ENCODE measurements at regions of chr1 and their contacts with region 1.

Region 1: GRCh38 chr1:30718636-30719405 is 4.6 kb downstream of the MATN1 start:
- DNase-seq: peak; percentile 32 to 99
- H3K4me3 ChIP-seq: peak overlapping the region; percentile 59 to 71
- H3K27ac ChIP-seq: peak overlapping the region; percentile 99
- H3K4me1 ChIP-seq: peaks cover 0 to 4% of the 10 kb centered on the region in 2 donors
- H3K27me3 ChIP-seq: no peaks in the 10 kb centered on the region
- CTCF ChIP-seq: peak; percentile 99 to 100 (median 99)

Region 2: DNA sequence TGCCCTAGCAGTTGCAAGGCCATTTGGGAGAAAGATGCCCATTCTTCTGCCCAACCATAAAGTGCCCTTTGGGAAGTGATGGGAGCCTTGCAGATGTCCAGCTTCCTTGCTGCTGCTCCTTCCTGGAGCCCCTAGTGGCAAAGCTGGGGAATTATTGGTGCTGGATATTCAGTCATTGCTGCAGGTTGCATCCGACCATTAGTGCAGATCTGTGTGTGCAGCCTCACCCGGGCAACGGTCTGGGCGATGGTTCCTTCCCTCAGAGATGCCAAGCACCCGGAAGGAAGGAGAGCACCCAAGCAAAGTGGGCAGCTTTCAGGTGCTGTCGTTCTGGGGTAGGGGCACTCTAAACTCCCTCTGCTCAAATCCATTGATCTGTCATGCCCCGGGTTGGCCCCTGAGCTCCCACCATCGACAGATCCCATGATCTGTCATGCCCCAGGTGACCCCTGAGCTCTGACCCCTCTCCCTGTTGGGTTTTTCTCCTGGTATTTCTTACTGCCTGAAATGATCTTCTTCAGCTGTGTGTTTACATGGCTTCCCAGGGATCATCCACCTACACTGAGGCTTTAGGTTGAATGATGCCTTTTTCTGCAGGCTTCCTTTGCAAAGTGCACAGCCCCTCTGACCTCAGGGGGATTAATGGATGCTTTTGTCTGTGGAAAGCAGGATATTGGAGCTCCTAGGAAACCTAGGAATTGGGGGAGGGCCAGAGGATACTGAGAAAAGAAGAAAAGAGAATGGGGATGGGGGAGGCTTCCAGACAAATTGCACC is 1015.0 kb before region 1 on chr1:
- intact Hi-C with region 1: loop called (anchors 5 kb)
- DNase-seq: no peak
- H3K4me3 ChIP-seq: no peak overlapping the region
- H3K27ac ChIP-seq: no peak overlapping the region
- H3K4me1 ChIP-seq: peaks cover 9 to 13% of the 10 kb centered on the region in 2 donors
- H3K27me3 ChIP-seq: no peaks in the 10 kb centered on the region
- CTCF ChIP-seq: peak; percentile 11 to 74 (median 62)

Region 3: DNA sequence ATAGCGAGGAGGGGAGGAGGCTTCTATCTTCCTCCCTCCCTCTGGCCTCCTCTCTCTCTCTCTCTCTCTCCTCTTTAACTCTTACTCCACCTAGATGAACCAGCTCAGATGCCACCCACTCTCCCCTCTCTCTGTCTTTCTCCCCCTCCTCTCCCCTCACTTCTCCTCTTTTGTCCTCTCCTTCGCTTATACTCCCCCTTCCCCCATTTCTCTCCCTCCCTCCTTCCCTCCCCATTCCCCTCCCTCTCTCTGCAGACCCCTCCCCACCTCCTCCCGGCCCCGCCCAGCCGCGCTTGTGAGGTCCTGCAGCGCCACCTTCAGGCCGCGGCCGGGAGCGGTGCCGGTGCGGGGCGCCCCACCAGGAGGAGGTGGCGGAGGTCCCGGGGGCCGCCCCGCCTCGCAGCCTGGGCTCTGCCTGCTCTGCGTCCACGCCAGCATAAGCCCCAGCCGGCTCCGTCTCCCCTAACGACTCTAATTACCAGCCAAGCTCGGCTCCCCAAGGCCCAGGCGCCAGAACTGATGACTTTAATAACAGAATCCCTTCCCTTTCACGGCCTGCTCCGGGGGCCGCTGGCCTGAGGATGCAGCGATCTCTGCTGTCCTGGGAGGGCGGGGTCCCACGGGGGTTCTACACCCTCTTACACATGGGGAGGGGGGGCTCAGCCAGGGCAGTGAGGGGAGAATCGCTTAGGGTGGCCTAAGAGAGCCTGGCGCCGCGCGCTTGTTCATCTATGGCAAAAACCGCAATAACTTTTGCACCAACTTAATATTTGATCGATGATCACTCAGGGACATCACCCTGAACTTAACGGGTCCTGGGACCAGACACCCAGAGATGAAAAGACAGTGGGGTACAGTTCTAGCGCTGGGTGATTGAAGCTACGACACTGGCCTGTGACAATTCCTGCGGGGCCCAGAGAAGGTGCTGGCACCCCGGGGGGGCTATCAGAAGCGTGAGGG is 632.7 kb before region 1 on chr1:
- intact Hi-C with region 1: loop called (anchors 10 kb)
- DNase-seq: peak in 1 of 2 donors; percentile 86
- H3K4me3 ChIP-seq: peak overlapping the region; percentile 28 to 61
- H3K27ac ChIP-seq: peak overlapping the region; percentile 96 to 98
- H3K4me1 ChIP-seq: peaks cover 10 to 28% of the 10 kb centered on the region in 2 donors
- H3K27me3 ChIP-seq: no peaks in the 10 kb centered on the region
- CTCF ChIP-seq: peak; percentile 83 to 99 (median 96)

Region 4: GRCh38 chr1:30779294-30780071 is 60.7 kb after region 1 on chr1:
- intact Hi-C with region 1: loop called (anchors 1 kb)
- DNase-seq: peak; percentile 72 to 93
- H3K4me3 ChIP-seq: no peak overlapping the region
- H3K27ac ChIP-seq: no peak overlapping the region
- H3K4me1 ChIP-seq: peaks cover 0 to 2% of the 10 kb centered on the region in 2 donors
- H3K27me3 ChIP-seq: no peaks in the 10 kb centered on the region
- CTCF ChIP-seq: peak; percentile 94 to 98 (median 94)

Region 5: DNA sequence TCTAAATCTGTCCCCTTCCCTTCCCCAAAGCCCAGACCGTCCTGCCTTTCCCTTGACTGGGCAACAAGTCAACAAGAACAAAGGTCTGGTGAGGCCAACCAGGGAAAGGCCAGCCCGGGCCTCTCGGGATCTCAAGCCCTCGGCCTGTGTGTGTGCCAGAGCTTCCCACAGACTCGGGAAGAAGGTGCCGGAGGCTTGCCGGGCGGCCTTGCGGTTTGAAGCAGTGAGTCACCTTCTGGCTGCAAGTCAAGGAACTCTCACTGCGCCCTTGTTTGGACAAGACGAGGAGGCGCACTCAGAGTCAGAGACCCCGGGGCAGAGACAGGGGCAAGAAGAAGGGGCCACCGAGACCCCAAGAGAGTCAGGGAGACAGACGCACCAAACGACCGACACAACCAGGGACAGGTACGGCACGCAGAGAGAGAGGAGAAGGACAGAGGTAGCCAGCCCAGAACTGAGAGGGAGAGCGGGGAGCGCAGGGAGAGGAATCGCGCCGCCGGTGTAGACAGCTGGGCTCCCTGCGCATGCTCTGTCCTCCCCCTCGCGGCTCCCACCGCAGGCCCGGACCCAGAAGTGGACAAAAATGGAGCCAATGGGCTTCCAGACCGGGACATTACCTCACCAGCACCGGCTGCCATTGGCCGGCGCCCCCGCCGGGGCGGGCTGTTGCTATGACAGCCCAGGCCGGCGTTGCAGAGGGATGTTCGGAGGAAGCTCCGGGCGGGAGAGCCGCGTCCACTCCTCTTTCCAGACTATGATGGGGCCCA is 105.3 kb after region 1 on chr1:
- intact Hi-C with region 1: loop called (anchors 2 kb)
- DNase-seq: peak; percentile 87 to 98
- H3K4me3 ChIP-seq: peak overlapping the region; percentile 46 to 58
- H3K27ac ChIP-seq: peak overlapping the region; percentile 95
- H3K4me1 ChIP-seq: peaks cover 4 to 13% of the 10 kb centered on the region in 2 donors
- H3K27me3 ChIP-seq: no peaks in the 10 kb centered on the region
- CTCF ChIP-seq: peak in 1 of 3 experiments; percentile 5

Region 6: DNA sequence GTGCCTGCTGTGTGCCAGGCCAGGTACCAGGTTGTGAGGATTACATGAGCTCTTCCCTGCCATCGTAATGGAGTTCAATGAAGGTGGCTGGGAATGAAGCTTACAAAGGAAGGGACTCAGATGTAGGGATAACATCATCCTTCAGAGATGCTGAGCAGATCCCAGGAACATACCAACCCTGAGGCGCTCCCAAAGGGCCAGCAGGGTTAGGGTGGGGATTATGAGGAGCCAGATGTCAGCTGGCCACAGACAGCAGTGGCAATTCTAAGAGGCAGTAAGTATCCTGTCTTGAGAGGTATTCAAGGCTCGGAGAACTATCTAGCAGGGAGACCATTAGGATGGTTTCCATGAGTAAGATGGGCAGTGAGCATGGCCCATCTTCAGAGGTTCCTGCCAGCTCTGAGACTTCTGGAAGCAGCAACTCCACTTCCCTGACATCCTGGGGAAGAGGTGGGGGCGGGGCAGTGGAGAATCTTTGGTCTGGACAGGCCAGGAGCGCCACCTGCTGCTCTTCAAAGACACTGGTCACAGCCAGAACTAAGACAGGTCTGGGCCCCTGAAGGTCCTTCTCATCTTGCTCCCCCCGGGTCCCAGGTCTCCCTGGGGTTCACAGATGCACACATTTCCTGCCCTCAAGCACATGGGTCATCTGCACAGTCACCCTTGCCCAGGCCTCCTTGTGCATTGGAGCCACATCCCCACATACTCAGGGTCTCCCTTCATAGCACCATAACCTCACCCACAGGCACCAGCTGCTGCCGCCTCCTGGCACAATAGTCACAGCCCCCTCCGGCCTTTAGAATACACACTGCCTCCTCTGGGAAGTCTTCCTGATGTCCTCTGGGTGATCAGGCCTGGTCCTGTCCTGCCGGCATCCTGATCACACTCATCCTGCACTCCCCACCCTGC is 192.5 kb after region 1 on chr1:
- intact Hi-C with region 1: loop called (anchors 1 kb)
- DNase-seq: peak; percentile 55 to 92
- H3K4me3 ChIP-seq: no peak overlapping the region
- H3K27ac ChIP-seq: no peak overlapping the region
- H3K4me1 ChIP-seq: peaks cover 6 to 14% of the 10 kb centered on the region in 2 donors
- H3K27me3 ChIP-seq: no peaks in the 10 kb centered on the region
- CTCF ChIP-seq: peak; percentile 85 to 89 (median 88)

Region 7: GRCh38 chr1:31065310-31066217 is 346.7 kb after region 1 on chr1 and contains the start of gene PUM1:
- intact Hi-C with region 1: loop called (anchors 10 kb)
- DNase-seq: peak; percentile 95 to 99
- H3K4me3 ChIP-seq: peak within 1 kb of the TSS; percentile 60 to 74
- H3K27ac ChIP-seq: peak within 1 kb of the TSS; percentile 78 to 91
- H3K4me1 ChIP-seq: peaks cover 0 to 21% of the 10 kb centered on the region in 2 donors
- H3K27me3 ChIP-seq: no peaks in the 10 kb centered on the region
- CTCF ChIP-seq: peak in 1 of 3 experiments; percentile 21
- total RNA-seq, gene PUM1: 52.3 TPM

Measured in ascending aorta (tissue), 2 donors.